ENCODE measurements at regions of chr1 and their contacts with region 1.

Region 1: GRCh38 chr1:116485071-116485735 is 85.6 kb downstream of the CD58 start:
- DNase-seq: peak; percentile 88
- ATAC-seq: peak; percentile 89
- H3K4me3 ChIP-seq: no peak overlapping the region
- H3K27ac ChIP-seq: peak overlapping the region; percentile 63
- H3K4me1 ChIP-seq: peaks cover 100% of the 10 kb centered on the region
- H3K27me3 ChIP-seq: no peaks in the 10 kb centered on the region
- CTCF ChIP-seq: peak; percentile 99
- EP300 ChIP-seq: peak in 1 of 2 experiments; percentile 63; a peak in 2 of 4 replicates
- POLR2A ChIP-seq: no peak
- RAD21 ChIP-seq: peak; percentile 99

Region 2: GRCh38 chr1:116139592-116140134 is 345.5 kb before region 1 on chr1:
- CTCF ChIA-PET with region 1: interaction called, 50 read pairs
- POLR2A ChIA-PET with region 1: interaction called, 27 read pairs
- in situ Hi-C with region 1: no loop called
- intact Hi-C with region 1: loop called (anchors 1 kb)
- DNase-seq: no peak
- ATAC-seq: no peak
- H3K4me3 ChIP-seq: no peak overlapping the region
- H3K27ac ChIP-seq: no peak overlapping the region
- H3K4me1 ChIP-seq: peaks cover 13% of the 10 kb centered on the region
- H3K27me3 ChIP-seq: no peaks in the 10 kb centered on the region
- CTCF ChIP-seq: no peak
- EP300 ChIP-seq: no peak
- POLR2A ChIP-seq: no peak
- RAD21 ChIP-seq: no peak

Region 3: GRCh38 chr1:116232989-116233514 is 252.2 kb before region 1 on chr1:
- CTCF ChIA-PET with region 1: no interaction called
- POLR2A ChIA-PET with region 1: no interaction called
- in situ Hi-C with region 1: no loop called
- intact Hi-C with region 1: loop called (anchors 5 kb)
- DNase-seq: no peak
- ATAC-seq: peak; percentile 59; the same call in 2 of the 3 replicates
- H3K4me3 ChIP-seq: no peak overlapping the region
- H3K27ac ChIP-seq: no peak overlapping the region
- H3K4me1 ChIP-seq: no peaks in the 10 kb centered on the region
- H3K27me3 ChIP-seq: peaks cover 1 to 23% of the 10 kb centered on the region in 2 experiments; a peak in 4 of 5 replicates
- CTCF ChIP-seq: peak; percentile 29; the same call in 1 of the 2 replicates
- EP300 ChIP-seq: no peak
- POLR2A ChIP-seq: no peak
- RAD21 ChIP-seq: no peak

Region 4: GRCh38 chr1:116377541-116378529 is 107.4 kb before region 1 on chr1:
- CTCF ChIA-PET with region 1: no interaction called
- POLR2A ChIA-PET with region 1: interaction called, 24 read pairs
- in situ Hi-C with region 1: no loop called
- intact Hi-C with region 1: loop called (anchors 2 kb)
- DNase-seq: peak; percentile 79
- ATAC-seq: peak; percentile 21
- H3K4me3 ChIP-seq: peak overlapping the region; percentile 39 to 89 (median 84)
- H3K27ac ChIP-seq: peak overlapping the region; percentile 77
- H3K4me1 ChIP-seq: peaks cover 85% of the 10 kb centered on the region
- H3K27me3 ChIP-seq: peaks cover 0 to 3% of the 10 kb centered on the region in 2 experiments; a peak in 1 of 5 replicates
- CTCF ChIP-seq: no peak
- EP300 ChIP-seq: peak in 1 of 2 experiments; percentile 60; a peak in 2 of 4 replicates
- POLR2A ChIP-seq: peak in 1 of 2 experiments; percentile 41; a peak in 1 of 4 replicates
- RAD21 ChIP-seq: no peak

Region 5: DNA sequence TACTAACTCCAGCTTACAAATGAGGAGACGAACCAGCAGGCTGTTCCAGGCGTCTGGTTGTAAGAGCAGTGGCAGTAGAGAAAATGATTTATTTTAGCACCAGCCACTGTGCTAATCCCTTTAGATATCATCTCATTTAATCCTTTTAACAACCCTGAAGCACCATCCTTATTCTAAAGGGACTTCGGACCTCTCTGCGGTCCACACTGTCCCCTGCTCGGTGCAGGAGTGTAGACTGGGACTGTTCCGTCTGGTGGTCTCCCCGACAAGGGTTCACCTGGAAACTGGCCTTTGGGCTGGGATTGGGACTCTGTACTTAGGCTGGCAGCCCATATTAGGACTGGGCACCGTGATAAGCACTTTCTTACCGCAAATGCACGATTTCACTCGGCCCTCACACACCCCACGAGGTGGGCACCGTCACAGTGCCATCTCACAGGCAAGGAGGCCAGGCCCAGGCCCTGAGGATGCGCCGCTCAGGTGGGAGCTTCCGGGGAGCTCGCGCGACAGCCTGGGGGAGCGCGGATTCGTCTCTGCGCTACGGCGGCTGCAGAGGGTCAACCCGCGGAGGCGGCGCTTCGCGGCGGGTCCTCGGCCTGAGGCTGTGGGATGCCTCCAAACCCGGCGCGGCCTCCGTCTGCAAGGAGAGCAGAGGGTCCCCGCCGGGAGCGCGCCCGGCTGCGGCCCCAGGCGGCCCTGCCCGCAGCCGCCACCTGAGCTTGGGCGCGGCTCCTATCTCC is 66.9 kb before region 1 on chr1:
- CTCF ChIA-PET with region 1: no interaction called
- POLR2A ChIA-PET with region 1: interaction called, 55 read pairs
- in situ Hi-C with region 1: no loop called
- intact Hi-C with region 1: loop called (anchors 2 kb)
- DNase-seq: peak; percentile 61
- ATAC-seq: peak; percentile 83
- H3K4me3 ChIP-seq: peak overlapping the region; percentile 75 to 94 (median 91)
- H3K27ac ChIP-seq: peak overlapping the region; percentile 82
- H3K4me1 ChIP-seq: peaks cover 73% of the 10 kb centered on the region
- H3K27me3 ChIP-seq: no peaks in the 10 kb centered on the region; a peak in 1 of 5 replicates
- CTCF ChIP-seq: peak; percentile 35; the same call in 1 of the 2 replicates
- EP300 ChIP-seq: no peak; a peak in 1 of 4 replicates
- POLR2A ChIP-seq: peak; percentile 87 to 90
- RAD21 ChIP-seq: peak; percentile 64

Region 6: GRCh38 chr1:116472431-116472961 is 12.7 kb before region 1 on chr1:
- CTCF ChIA-PET with region 1: interaction called, 3 read pairs
- POLR2A ChIA-PET with region 1: interaction called, 65 read pairs
- in situ Hi-C with region 1: no loop called
- intact Hi-C with region 1: loop called (anchors 2 kb)
- DNase-seq: peak; percentile 62
- ATAC-seq: no peak
- H3K4me3 ChIP-seq: no peak overlapping the region
- H3K27ac ChIP-seq: peak overlapping the region; percentile 58
- H3K4me1 ChIP-seq: peaks cover 100% of the 10 kb centered on the region
- H3K27me3 ChIP-seq: no peaks in the 10 kb centered on the region
- CTCF ChIP-seq: no peak
- EP300 ChIP-seq: no peak; a peak in 1 of 4 replicates
- POLR2A ChIP-seq: no peak
- RAD21 ChIP-seq: no peak

Region 7: GRCh38 chr1:116586741-116587143 is 101.5 kb after region 1 on chr1:
- CTCF ChIA-PET with region 1: no interaction called
- POLR2A ChIA-PET with region 1: no interaction called
- in situ Hi-C with region 1: no loop called
- intact Hi-C with region 1: no loop called
- DNase-seq: no peak
- ATAC-seq: no peak
- H3K4me3 ChIP-seq: no peak overlapping the region
- H3K27ac ChIP-seq: no peak overlapping the region
- H3K4me1 ChIP-seq: no peaks in the 10 kb centered on the region; the same call in 1 of the 2 replicates
- H3K27me3 ChIP-seq: no peaks in the 10 kb centered on the region; a peak in 1 of 5 replicates
- CTCF ChIP-seq: no peak
- EP300 ChIP-seq: no peak
- POLR2A ChIP-seq: no peak
- RAD21 ChIP-seq: no peak